H1 (cell line): ENCODE measurements at regions of chr7 and their contacts with region 1.

Region 1: DNA sequence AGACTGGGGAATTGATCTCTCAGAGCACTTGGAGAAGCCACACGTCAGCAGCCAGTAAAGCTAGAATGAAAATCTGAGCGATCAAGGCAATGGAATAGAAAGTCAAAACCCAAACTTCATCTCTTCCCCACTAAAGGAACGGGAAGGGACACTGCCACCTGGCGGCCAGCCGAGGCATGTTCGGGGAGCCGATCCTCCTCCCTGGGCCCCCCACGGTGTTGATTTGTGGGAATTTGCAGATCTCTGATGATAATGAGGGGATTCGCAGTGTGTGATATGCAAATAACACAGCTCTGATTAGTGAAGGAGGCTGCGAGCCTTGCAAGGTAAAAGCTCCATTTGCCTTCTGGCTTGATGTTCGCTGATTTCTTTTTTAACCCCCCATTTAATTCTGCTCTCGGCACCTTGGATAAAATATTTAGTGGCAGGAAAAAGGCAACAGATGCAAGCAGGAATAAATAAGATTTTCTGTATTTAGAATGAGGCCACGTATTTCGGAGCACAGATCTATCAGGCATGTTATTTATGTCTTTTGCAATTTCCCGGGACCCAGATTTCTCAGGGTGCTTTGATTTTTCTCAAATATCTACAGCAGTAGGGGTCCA is 258.6 kb downstream of the PAXIP1 start:
- DNase-seq: peak; percentile 23 to 95
- H3K4me3 ChIP-seq: no peak overlapping the region
- H3K27ac ChIP-seq: no peak overlapping the region
- H3K4me1 ChIP-seq: peaks cover 0 to 5% (median 3%) of the 10 kb centered on the region in 4 experiments; a peak in 4 of 7 replicates
- H3K27me3 ChIP-seq: no peaks in the 10 kb centered on the region
- CTCF ChIP-seq: peak; percentile 85 to 95 (median 95)
- EP300 ChIP-seq: no peak
- POLR2A ChIP-seq: no peak
- RAD21 ChIP-seq: peak; percentile 70 to 78

Region 2: DNA sequence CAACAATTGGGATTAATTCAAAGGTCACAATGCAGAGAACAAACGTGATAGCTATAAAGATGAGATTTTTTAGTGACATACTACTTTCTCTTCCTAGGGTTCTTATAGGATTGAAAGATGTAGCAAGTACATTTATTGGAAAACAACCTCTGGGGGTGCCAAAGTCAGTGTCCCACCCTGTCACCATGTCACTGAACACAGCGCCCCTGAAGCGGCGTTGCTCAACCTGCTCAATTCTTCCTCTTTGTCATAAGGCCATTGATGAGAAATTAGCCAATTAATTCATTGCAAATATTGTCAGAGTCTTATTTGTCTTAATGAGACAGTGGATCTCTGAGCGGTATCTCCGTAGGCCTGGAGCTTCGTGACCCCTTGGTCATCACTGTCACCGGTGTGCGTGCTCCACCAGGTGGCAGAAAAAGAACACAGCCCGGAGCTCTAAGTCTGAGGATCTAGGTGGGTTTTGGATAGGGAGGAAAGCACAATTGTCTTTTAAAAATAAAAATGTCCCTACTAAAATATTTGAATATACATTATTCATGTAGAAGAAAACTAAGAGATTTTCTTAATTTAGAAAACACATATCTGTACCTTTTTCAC is 104.0 kb before region 1 on chr7:
- CTCF ChIA-PET with region 1: interaction called, 16 read pairs
- POLR2A ChIA-PET with region 1: interaction called, 3 read pairs
- DNase-seq: peak in 1 of 2 experiments; percentile 54
- H3K4me3 ChIP-seq: no peak overlapping the region
- H3K27ac ChIP-seq: no peak overlapping the region
- H3K4me1 ChIP-seq: no peaks in the 10 kb centered on the region
- H3K27me3 ChIP-seq: no peaks in the 10 kb centered on the region
- CTCF ChIP-seq: peak; percentile 65 to 73 (median 70)
- EP300 ChIP-seq: no peak
- POLR2A ChIP-seq: no peak
- RAD21 ChIP-seq: peak; percentile 72 to 87

Region 3: GRCh38 chr7:154698726-154699291 is 45.5 kb before region 1 on chr7:
- CTCF ChIA-PET with region 1: interaction called, 18 read pairs
- POLR2A ChIA-PET with region 1: no interaction called
- DNase-seq: peak; percentile 31 to 72
- H3K4me3 ChIP-seq: no peak overlapping the region
- H3K27ac ChIP-seq: no peak overlapping the region
- H3K4me1 ChIP-seq: no peaks in the 10 kb centered on the region; a peak in 3 of 7 replicates
- H3K27me3 ChIP-seq: no peaks in the 10 kb centered on the region
- CTCF ChIP-seq: peak; percentile 76 to 93 (median 79)
- EP300 ChIP-seq: no peak
- POLR2A ChIP-seq: no peak
- RAD21 ChIP-seq: peak; percentile 68 to 72

Region 4: GRCh38 chr7:154729056-154729455 is 15.3 kb before region 1 on chr7:
- CTCF ChIA-PET with region 1: interaction called, 22 read pairs
- POLR2A ChIA-PET with region 1: no interaction called
- DNase-seq: no peak
- H3K4me3 ChIP-seq: no peak overlapping the region
- H3K27ac ChIP-seq: no peak overlapping the region
- H3K4me1 ChIP-seq: peaks cover 0 to 3% (median 0%) of the 10 kb centered on the region in 4 experiments; a peak in 1 of 7 replicates
- H3K27me3 ChIP-seq: no peaks in the 10 kb centered on the region
- CTCF ChIP-seq: no peak
- EP300 ChIP-seq: no peak
- POLR2A ChIP-seq: no peak
- RAD21 ChIP-seq: no peak

Region 5: DNA sequence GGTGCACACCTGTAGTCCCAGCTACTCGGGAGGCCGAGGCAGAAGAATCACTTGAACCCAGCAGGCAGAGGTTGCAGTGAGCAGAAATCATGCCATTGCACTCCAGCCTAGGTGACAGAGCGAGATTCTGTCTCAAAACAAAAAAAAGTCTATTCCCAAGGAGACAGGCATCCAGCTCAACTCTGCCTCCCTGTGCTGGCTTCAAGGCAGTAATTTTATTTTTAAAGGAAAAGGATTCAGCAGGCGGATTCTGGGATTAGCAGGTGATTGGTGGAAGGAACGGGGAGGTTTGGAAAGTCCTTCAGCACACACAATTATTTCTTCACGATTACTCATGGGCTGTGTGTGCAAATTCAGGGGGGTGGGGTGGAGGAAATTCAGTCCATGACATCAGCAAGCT is 15.6 kb after region 1 on chr7:
- CTCF ChIA-PET with region 1: interaction called, 36 read pairs
- POLR2A ChIA-PET with region 1: interaction called, 3 read pairs
- DNase-seq: no peak
- H3K4me3 ChIP-seq: no peak overlapping the region
- H3K27ac ChIP-seq: no peak overlapping the region
- H3K4me1 ChIP-seq: peaks cover 0 to 6% (median 1%) of the 10 kb centered on the region in 4 experiments; a peak in 3 of 7 replicates
- H3K27me3 ChIP-seq: no peaks in the 10 kb centered on the region
- CTCF ChIP-seq: peak in 1 of 3 experiments; percentile 7; a peak in 2 of 4 replicates
- EP300 ChIP-seq: no peak
- POLR2A ChIP-seq: no peak
- RAD21 ChIP-seq: peak; percentile 9 to 12; a peak in 1 of 4 replicates

Region 6: GRCh38 chr7:154777023-154777422 is 32.7 kb after region 1 on chr7:
- CTCF ChIA-PET with region 1: interaction called, 20 read pairs
- POLR2A ChIA-PET with region 1: no interaction called
- DNase-seq: no peak
- H3K4me3 ChIP-seq: no peak overlapping the region
- H3K27ac ChIP-seq: no peak overlapping the region
- H3K4me1 ChIP-seq: peaks cover 0 to 3% (median 0%) of the 10 kb centered on the region in 4 experiments; a peak in 1 of 7 replicates
- H3K27me3 ChIP-seq: no peaks in the 10 kb centered on the region
- CTCF ChIP-seq: peak; percentile 37 to 46 (median 42); a peak in 3 of 4 replicates
- EP300 ChIP-seq: no peak
- POLR2A ChIP-seq: no peak
- RAD21 ChIP-seq: peak; percentile 35 to 37; a peak in 2 of 4 replicates

Region 7: DNA sequence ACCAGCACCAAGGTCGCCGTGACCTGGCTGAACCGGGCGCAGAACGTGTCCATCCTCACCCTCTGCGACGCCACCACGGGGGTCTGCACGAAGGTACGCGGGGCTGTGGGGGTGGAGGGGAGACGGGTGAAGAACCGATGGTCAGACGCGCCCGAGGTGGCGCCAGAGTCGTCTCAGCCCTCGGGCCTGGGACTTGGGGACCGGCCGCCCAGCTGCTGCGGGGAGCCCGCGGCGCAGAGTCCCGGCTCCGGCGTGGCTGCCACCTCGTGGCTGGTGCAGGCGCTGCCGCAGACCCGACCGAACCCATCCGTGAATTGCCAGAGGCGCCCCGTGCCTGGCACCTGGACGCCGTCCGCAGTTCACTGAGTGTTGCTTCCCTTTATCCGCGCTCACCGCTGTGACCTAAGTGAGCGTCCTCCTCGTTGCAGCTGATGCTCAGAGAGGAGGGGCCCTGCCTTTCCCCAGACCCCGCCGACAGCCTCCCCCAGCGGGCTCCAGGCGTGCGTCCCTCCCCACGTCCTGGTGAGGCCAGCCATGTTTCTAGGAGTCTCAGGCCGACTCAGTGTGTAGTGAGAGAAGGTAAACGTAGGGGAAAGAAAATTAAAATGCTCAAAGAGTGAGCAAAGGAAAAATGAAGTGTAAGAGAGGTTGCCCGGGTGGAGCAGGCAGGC is 49.9 kb after region 1 on chr7:
- CTCF ChIA-PET with region 1: interaction called, 10 read pairs
- POLR2A ChIA-PET with region 1: no interaction called
- DNase-seq: peak in 1 of 2 experiments; percentile 90
- H3K4me3 ChIP-seq: peak overlapping the region; percentile 11 to 57 (median 32); a peak in 7 of 8 replicates
- H3K27ac ChIP-seq: no peak overlapping the region
- H3K4me1 ChIP-seq: peaks cover 0 to 2% (median 0%) of the 10 kb centered on the region in 4 experiments; a peak in 3 of 7 replicates
- H3K27me3 ChIP-seq: no peaks in the 10 kb centered on the region; a peak in 1 of 7 replicates
- CTCF ChIP-seq: peak; percentile 83 to 91 (median 90)
- EP300 ChIP-seq: no peak
- POLR2A ChIP-seq: no peak; a peak in 1 of 3 replicates
- RAD21 ChIP-seq: peak; percentile 62 to 73